Dorsolateral prefrontal cortex (tissue), 120 donors: ENCODE measurements at regions of chr5 and their contacts with region 1.

Region 1: GRCh38 chr5:1555011-1555807 is 31.4 kb upstream of the LPCAT1 start:
- DNase-seq: peak in 2 of 10 donors; percentile 8 to 20
- H3K4me3 ChIP-seq: no peak overlapping the region
- H3K27ac ChIP-seq: no peak overlapping the region
- H3K27me3 ChIP-seq: peaks cover 0 to 48% (median under 1%) of the 10 kb centered on the region in 45 donors
- CTCF ChIP-seq: no peak

Region 2: GRCh38 chr5:1182633-1183423 is 372.4 kb before region 1 on chr5:
- intact Hi-C with region 1: loop called in 1 of 2 experiments (anchors 10 kb)
- DNase-seq: peak in 9 of 10 donors; percentile 48 to 89 (median 74)
- H3K4me3 ChIP-seq: peak overlapping the region in 38 of 59 donors; percentile 1 to 54 (median 32)
- H3K27ac ChIP-seq: peak overlapping the region in 58 of 59 donors; percentile 37 to 96 (median 84)
- H3K27me3 ChIP-seq: peaks cover 0 to 22% (median 4%) of the 10 kb centered on the region in 45 donors
- CTCF ChIP-seq: peak in 12 of 56 donors; percentile 11 to 45 (median 24)

Region 3: DNA sequence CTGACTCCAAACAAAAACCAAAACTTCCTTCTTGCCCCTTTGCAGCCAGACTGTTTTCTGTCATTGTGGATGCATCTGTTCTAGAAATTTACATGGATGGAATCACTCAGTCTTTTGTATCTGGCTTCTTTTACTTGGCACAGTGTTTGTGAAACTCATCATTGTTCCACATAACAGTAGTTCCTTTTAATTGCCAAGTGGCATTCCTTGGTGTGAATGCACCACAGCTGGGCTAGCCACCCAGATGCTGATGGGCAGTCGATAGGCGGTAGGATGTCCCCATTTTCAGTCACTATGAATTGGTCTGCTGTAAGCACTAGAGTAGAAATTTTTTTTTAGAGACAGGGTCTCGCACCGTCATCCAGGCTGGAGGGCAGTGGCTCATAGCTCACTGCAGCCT is 204.1 kb before region 1 on chr5:
- intact Hi-C with region 1: loop called in 1 of 2 experiments (anchors 2 kb)
- DNase-seq: peak in 3 of 10 donors; percentile 58 to 76 (median 73)
- H3K4me3 ChIP-seq: no peak overlapping the region
- H3K27ac ChIP-seq: peak overlapping the region in 42 of 59 donors; percentile 1 to 88 (median 67)
- H3K27me3 ChIP-seq: no peaks in the 10 kb centered on the region
- CTCF ChIP-seq: peak in 5 of 56 donors; percentile 11 to 31 (median 21)

Region 4: GRCh38 chr5:1633605-1634336 is 78.6 kb after region 1 on chr5:
- intact Hi-C with region 1: loop called in 1 of 2 experiments (anchors 2 kb)
- DNase-seq: peak in 9 of 10 donors; percentile 66 to 92 (median 81)
- H3K4me3 ChIP-seq: peak overlapping the region; percentile 65 to 94 (median 80)
- H3K27ac ChIP-seq: peak overlapping the region in 57 of 59 donors; percentile 38 to 94 (median 82)
- H3K27me3 ChIP-seq: peaks cover 0 to under 1% (median 0%) of the 10 kb centered on the region in 45 donors
- CTCF ChIP-seq: peak in 34 of 56 donors; percentile 11 to 44 (median 23)